ENCODE measurements at regions of chr14 and their contacts with region 1.

Region 1: DNA sequence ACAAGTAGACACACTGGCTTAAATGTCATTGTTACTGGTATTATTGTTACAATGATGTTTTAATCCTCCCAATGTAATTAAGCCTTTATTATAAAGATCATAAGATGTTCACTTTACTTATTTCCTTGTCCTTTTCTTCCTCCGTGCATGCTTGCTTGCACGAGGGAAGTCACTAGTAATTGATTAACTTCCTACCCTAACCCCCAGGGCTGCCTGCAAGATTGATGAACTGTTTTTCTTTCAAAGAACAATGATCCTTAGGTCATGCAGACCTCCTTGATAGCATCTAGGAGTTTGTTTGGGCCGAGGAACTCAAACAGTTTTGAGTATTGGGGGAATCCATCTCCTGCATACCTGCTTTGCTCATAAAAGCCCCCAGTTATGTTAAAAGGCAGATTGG is 43.0 kb downstream of the GLRX5 start:
- DNase-seq: no peak
- H3K4me3 ChIP-seq: no peak overlapping the region
- H3K27ac ChIP-seq: no peak overlapping the region
- H3K4me1 ChIP-seq: no peaks in the 10 kb centered on the region
- H3K27me3 ChIP-seq: no peaks in the 10 kb centered on the region
- CTCF ChIP-seq: no peak

Region 2: GRCh38 chr14:95475540-95476245 is 102.2 kb before region 1 on chr14:
- CTCF ChIA-PET with region 1: no interaction called
- POLR2A ChIA-PET with region 1: interaction called, 14 read pairs
- intact Hi-C with region 1: no loop called
- DNase-seq: no peak
- H3K4me3 ChIP-seq: no peak overlapping the region
- H3K27ac ChIP-seq: no peak overlapping the region
- H3K4me1 ChIP-seq: peaks cover 4% of the 10 kb centered on the region
- H3K27me3 ChIP-seq: no peaks in the 10 kb centered on the region
- CTCF ChIP-seq: no peak

Region 3: DNA sequence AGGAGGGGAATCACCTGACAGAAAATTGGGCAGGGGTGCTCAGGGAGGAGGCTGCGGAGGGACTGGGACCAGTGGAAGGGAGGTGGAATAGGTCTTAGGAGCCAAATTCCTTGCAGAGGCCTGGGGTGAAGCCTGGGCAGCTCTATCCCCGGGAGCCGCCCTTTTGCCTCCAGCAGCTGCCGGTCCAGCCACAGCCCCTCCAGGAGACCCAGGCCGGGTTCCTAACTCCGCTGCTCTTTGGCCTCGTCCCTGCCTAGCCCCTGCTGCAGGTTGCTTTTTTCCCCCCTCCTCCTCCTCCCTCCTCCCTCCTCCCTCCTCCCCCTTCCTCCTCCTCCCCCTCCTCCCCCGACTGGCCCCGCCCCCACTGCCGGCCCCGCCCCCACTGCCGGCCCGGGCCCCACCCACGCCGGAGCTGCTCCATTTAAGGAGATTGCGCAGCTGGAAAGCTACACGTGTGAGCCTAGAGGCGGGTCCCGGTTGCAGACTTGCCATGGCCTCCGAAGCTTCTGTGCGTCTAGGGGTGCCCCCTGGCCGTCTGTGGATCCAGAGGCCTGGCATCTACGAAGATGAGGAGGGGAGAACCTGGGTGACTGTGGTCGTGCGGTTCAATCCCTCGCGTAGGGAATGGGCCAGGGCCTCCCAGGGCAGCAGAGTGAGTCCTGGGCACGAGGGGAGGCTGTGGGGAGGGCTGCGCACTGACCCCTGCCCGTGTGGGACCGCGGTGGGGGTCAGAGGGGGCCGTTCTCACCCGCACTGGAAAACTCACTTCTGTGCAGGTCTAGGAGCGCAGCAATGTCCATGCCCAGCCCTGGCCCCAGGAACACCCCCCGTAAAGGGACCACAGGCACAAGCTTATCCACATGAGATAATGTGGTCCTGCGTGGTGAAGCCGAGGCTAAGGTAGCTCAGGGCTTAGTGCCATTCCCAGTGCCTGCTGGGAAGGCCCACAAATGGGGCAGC is 108.4 kb after region 1 on chr14 and contains the start of gene TCL1B:
- CTCF ChIA-PET with region 1: no interaction called
- POLR2A ChIA-PET with region 1: no interaction called
- intact Hi-C with region 1: no loop called
- DNase-seq: no peak
- H3K4me3 ChIP-seq: no peak within 1 kb of the TSS
- H3K27ac ChIP-seq: no peak within 1 kb of the TSS
- H3K4me1 ChIP-seq: no peaks in the 10 kb centered on the region
- H3K27me3 ChIP-seq: no peaks in the 10 kb centered on the region
- CTCF ChIP-seq: no peak
- total RNA-seq, gene TCL1B: 0.83 and 1.1 TPM in 2 replicates

Measured in A673 (cell line).